Activated naive CD4-positive, alpha-beta T cell treated with anti-CD3 and anti-CD28 coated beads for 36 hours (primary cell): ENCODE measurements at regions of chr14 and their contacts with region 1.

Region 1: DNA sequence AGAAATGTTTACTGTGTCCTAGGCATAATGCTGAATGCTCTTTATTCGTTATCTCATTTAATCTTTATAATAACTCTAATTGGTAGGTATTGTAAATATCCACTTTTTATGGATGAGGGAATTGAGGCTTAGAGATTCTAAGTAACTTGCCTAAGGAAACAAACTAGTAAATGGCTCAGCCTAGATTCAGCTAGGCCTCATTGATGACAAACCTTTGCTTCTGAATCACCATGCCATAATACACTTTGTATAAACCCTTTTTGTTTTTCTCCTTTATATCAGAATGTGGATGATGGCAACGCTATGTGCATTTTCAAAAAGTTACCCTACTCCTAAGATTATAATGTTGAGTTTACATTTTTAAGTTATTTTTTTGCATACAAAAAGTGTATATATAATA is 34.0 kb downstream of the MNAT1 start:
- DNase-seq: no peak
- H3K4me3 Mint-ChIP-seq: no peak overlapping the region
- H3K27ac Mint-ChIP-seq: no peak overlapping the region
- H3K4me1 Mint-ChIP-seq: peaks cover 7% of the 10 kb centered on the region
- H3K27me3 Mint-ChIP-seq: no peaks in the 10 kb centered on the region

Region 2: GRCh38 chr14:60381909-60382308 is 386.7 kb before region 1 on chr14:
- CTCF ChIA-PET with region 1: no interaction called
- intact Hi-C with region 1: no loop called
- DNase-seq: no peak
- H3K4me3 Mint-ChIP-seq: no peak overlapping the region
- H3K27ac Mint-ChIP-seq: no peak overlapping the region
- H3K4me1 Mint-ChIP-seq: no peaks in the 10 kb centered on the region
- H3K27me3 Mint-ChIP-seq: peaks cover 25% of the 10 kb centered on the region

Region 3: DNA sequence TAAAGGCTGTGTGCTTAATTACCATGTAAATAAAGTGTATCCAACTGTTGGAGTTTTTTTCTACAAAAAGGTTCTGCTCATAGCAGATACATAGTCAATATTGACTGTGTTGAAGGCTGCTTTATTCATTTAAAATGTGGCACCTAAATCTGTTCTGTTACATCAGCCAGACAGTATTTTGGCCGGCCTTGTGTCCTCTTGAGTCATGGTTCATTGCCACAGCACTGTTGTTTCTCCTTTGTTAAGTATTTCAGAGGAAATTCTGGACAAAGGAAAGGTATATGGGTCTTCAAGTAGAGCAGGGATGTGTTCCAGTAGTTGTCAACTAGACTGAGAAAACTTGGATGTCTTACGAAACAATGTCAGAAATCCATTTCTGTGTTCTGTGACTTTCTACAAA is 308.0 kb after region 1 on chr14:
- CTCF ChIA-PET with region 1: no interaction called
- intact Hi-C with region 1: loop called (anchors 2 kb)
- DNase-seq: no peak
- H3K4me3 Mint-ChIP-seq: no peak overlapping the region
- H3K27ac Mint-ChIP-seq: no peak overlapping the region
- H3K4me1 Mint-ChIP-seq: no peaks in the 10 kb centered on the region
- H3K27me3 Mint-ChIP-seq: no peaks in the 10 kb centered on the region